OCI-LY7 (cell line): ENCODE measurements at regions of chr17 and their contacts with region 1.

Region 1: DNA sequence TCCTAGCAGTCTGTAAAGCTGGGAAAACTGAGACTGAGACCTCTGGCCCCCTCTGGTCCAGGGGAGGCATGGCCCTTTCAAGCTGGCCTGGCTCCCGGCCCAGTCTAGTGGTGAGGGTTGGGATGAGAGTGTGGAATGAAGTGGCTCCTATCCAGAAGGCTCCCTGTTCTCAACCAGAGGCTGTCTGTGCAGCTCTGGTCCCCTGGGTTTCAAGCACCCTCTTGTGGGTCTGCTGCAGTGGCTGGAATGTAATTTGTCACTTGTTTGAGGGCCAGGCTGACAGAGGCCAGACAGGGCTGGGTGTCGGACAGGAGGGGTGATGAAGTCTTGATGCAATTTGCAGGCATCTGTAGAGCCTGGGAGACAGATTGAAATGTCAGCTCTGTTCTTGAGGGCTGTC is 22.1 kb upstream of the PHF12 start:
- DNase-seq: no peak
- H3K4me3 ChIP-seq: no peak overlapping the region
- H3K27ac ChIP-seq: no peak overlapping the region
- H3K4me1 ChIP-seq: peaks cover 8% of the 10 kb centered on the region
- CTCF ChIP-seq: no peak

Region 2: GRCh38 chr17:28812091-28812747 is 161.2 kb before region 1 on chr17:
- CTCF ChIA-PET with region 1: no interaction called
- POLR2A ChIA-PET with region 1: no interaction called
- intact Hi-C with region 1: no loop called
- DNase-seq: peak; percentile 97
- H3K4me3 ChIP-seq: peak overlapping the region; percentile 75
- H3K27ac ChIP-seq: peak overlapping the region; percentile 70
- H3K4me1 ChIP-seq: peaks cover 33% of the 10 kb centered on the region
- CTCF ChIP-seq: no peak

Region 3: GRCh38 chr17:28951991-28952975 is 21.1 kb before region 1 on chr17:
- CTCF ChIA-PET with region 1: no interaction called
- POLR2A ChIA-PET with region 1: no interaction called
- intact Hi-C with region 1: no loop called
- DNase-seq: peak; percentile 99
- H3K4me3 ChIP-seq: peak overlapping the region; percentile 80
- H3K27ac ChIP-seq: peak overlapping the region; percentile 89
- H3K4me1 ChIP-seq: peaks cover 24% of the 10 kb centered on the region
- CTCF ChIP-seq: no peak

Region 4: GRCh38 chr17:29059281-29059680 is 85.9 kb after region 1 on chr17:
- CTCF ChIA-PET with region 1: no interaction called
- POLR2A ChIA-PET with region 1: no interaction called
- intact Hi-C with region 1: loop called (anchors 5 kb)
- DNase-seq: no peak
- H3K4me3 ChIP-seq: no peak overlapping the region
- H3K27ac ChIP-seq: no peak overlapping the region
- H3K4me1 ChIP-seq: no peaks in the 10 kb centered on the region
- CTCF ChIP-seq: no peak